H1 (cell line): ENCODE measurements at regions of chr13 and their contacts with region 1.

Region 1: GRCh38 chr13:40974460-40975407 is 44.4 kb downstream of the ELF1 start:
- DNase-seq: no peak
- H3K4me3 ChIP-seq: no peak overlapping the region
- H3K27ac ChIP-seq: no peak overlapping the region
- H3K4me1 ChIP-seq: no peaks in the 10 kb centered on the region
- H3K27me3 ChIP-seq: no peaks in the 10 kb centered on the region
- CTCF ChIP-seq: peak; percentile 13 to 76 (median 65)
- EP300 ChIP-seq: no peak
- POLR2A ChIP-seq: no peak
- RAD21 ChIP-seq: peak; percentile 51 to 65

Region 2: DNA sequence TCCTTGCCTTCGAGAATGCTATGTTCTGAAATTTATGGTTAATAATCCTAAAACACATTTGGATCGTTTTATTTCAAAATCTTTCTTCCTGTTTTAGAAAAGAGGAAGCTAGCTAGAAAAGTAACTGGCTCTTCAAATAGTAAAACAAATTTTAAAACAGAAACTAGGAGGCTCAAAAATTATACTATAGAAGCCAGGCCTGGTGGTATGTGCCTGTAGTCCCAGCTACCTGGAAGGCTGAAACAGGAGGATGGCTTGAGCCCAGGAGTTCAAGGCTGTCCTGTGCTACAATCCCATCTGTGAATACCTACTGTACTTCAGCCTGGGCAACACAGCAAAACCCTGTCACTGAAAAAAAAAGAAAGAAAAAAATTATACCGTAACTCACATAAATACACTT is 13.5 kb before region 1 on chr13:
- CTCF ChIA-PET with region 1: interaction called, 13 read pairs
- POLR2A ChIA-PET with region 1: no interaction called
- DNase-seq: no peak
- H3K4me3 ChIP-seq: no peak overlapping the region
- H3K27ac ChIP-seq: no peak overlapping the region
- H3K4me1 ChIP-seq: no peaks in the 10 kb centered on the region
- H3K27me3 ChIP-seq: no peaks in the 10 kb centered on the region
- CTCF ChIP-seq: no peak
- EP300 ChIP-seq: no peak
- POLR2A ChIP-seq: no peak
- RAD21 ChIP-seq: no peak

Region 3: DNA sequence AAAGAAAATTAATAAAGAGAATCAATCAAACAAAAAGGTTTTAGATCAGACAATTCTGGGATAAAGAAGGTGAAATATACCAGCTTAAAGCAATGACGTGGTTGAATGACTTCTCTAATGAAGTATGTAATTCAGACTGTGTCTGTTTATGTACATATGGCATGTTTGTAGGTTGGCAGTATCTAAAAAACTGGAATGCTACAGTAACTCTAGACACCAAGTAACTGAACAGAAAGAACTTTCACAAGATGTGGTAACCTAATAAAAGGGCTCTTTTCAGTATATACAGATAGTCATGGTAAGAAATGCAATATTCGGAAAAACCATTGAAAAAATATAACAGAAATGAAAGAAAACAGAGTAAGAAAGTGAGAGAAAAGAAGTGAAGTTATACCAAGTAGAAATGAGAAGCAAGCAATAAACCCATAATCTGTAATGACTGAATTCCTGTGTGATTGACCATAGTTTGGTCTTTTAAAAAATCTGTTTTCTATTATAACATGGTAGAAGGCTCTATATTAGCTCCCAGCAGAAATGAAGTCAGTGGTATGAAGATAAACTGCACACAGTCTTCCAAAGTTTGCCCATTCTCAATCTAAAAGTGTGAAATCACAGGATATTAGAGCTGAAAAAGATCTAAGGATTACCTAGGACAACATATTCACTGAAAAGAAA is 13.0 kb after region 1 on chr13:
- CTCF ChIA-PET with region 1: interaction called, 18 read pairs
- POLR2A ChIA-PET with region 1: no interaction called
- DNase-seq: no peak
- H3K4me3 ChIP-seq: no peak overlapping the region
- H3K27ac ChIP-seq: no peak overlapping the region
- H3K4me1 ChIP-seq: no peaks in the 10 kb centered on the region
- H3K27me3 ChIP-seq: no peaks in the 10 kb centered on the region
- CTCF ChIP-seq: no peak
- EP300 ChIP-seq: no peak
- POLR2A ChIP-seq: no peak
- RAD21 ChIP-seq: no peak

Region 4: GRCh38 chr13:41029629-41030028 is 54.9 kb after region 1 on chr13:
- CTCF ChIA-PET with region 1: interaction called, 22 read pairs
- POLR2A ChIA-PET with region 1: no interaction called
- DNase-seq: no peak
- H3K4me3 ChIP-seq: no peak overlapping the region
- H3K27ac ChIP-seq: no peak overlapping the region
- H3K4me1 ChIP-seq: no peaks in the 10 kb centered on the region
- H3K27me3 ChIP-seq: no peaks in the 10 kb centered on the region
- CTCF ChIP-seq: peak; percentile 13 to 71 (median 69)
- EP300 ChIP-seq: no peak
- POLR2A ChIP-seq: no peak
- RAD21 ChIP-seq: peak; percentile 86 to 90